ENCODE measurements at regions of chr20 and their contacts with region 1.

Region 1: DNA sequence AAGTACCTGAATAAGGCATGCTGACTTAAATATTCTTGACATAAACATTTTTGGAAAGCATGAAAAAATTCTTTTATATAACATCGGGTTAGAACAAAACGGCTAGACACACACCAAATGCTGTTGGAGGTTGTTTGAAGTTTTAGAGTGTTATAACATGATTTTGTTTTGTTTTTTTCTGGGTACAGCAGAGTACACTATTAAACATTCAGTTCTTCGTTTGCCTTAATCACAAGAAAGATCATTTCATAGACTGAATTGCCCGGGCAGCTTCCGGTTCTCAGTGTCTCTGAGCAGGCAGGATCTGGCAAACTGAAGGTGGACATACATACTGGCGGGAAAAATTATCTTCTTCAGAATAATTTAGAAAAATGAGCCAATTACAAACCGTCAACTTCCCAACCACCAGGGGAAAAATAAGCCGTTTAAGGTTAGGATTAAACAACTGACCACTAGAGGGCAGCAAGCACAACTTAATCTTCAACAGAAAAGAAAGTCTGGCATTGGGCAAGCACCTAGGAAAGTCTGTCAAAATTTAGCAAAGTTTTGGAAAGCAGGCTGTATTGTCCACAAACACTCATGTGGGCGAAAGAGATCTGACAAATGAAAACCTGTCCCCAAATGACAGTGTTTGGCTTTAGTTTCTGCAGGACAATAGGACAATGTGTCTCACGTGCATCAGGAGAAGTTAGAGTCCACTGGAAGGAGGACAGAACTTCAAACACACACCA is 15.0 kb downstream of the ZNF217 start:
- DNase-seq: peak in 2 of 10 donors; percentile 39 to 48
- H3K4me3 ChIP-seq: peak overlapping the region in 30 of 59 donors; percentile 0 to 40 (median 20)
- H3K27ac ChIP-seq: peak overlapping the region in 33 of 59 donors; percentile 5 to 78 (median 42)
- H3K27me3 ChIP-seq: no peaks in the 10 kb centered on the region
- CTCF ChIP-seq: peak; percentile 88 to 99 (median 96)

Region 2: DNA sequence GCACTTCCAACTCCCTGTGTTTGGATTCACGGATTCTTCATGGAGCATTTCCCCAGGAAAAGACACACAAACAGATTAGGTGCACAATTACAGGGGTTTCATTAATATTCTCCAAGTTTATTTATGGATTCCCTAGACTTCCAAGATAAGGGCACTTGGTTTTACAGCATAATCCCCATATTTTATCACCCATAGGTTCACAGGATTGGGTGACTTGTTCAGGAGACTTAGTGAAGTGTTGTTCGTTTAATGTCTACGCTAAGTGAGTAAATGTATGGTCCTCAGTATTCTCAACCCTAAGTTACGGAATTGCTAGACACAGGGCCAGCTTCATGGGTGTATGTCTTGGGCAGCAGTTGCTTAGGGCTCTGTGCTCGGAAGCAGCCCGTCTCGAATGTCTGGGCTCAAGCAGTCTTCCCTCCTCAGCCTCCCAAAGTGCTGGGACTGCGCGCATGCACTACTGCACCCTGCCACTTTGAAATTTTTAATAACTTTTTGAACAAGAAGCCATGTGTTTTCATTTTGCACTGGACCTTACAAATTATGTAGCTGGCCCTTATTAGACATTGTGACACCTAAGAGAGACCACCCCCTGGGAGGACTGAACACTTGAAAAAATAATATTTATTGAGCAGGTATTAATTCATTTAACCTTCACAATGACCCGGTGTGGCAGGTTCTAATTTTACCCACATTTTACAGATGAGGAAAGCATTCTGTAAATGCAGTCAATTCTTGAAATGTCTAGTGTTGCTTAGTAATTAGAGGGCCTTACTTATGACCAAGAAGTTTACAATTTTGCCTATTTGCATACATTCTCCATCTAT is 106.5 kb after region 1 on chr20:
- intact Hi-C with region 1: no loop called
- DNase-seq: no peak
- H3K4me3 ChIP-seq: no peak overlapping the region
- H3K27ac ChIP-seq: no peak overlapping the region
- H3K27me3 ChIP-seq: no peaks in the 10 kb centered on the region
- CTCF ChIP-seq: no peak

Region 3: DNA sequence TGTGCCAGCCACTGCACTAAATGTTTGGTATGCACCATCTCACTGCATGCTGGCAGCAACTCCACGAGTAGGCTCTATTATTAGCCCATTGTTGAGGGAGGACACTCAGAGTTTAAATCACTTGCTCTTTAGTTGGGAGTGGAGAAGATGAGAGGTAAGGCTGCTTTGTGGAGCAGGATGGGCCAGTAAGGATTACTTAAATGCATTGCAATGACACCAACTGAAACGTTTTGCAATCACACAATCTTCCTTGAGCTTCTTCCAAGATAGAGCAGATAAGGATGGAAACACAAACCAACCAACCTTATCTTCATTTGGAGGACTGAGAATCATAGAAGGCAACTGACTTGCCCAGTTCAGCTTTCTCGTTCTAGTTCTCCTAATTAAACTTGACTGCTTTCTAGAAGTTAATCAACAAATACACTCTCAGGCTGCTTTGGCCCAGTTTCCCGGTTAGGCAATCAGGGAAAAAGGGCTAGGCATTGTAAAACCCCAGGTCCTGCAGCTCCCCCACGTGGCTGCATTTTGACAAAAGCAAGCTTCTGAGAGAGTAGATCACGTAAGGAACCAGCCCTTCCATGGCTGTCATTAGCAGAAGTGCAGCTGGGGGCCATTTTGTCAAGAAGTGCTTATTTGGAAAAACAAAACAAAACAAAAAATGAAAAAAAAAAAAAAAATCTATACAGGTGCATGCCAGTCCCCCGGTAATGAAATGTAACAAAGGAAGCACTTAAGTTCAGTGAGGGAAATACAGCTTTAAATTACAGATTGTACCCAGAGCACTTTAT is 361.1 kb after region 1 on chr20:
- intact Hi-C with region 1: loop called (anchors 5 kb)
- DNase-seq: peak; percentile 15 to 91 (median 82)
- H3K4me3 ChIP-seq: peak overlapping the region in 49 of 59 donors; percentile 1 to 60 (median 34)
- H3K27ac ChIP-seq: peak overlapping the region in 56 of 59 donors; percentile 37 to 86 (median 70)
- H3K27me3 ChIP-seq: no peaks in the 10 kb centered on the region
- CTCF ChIP-seq: peak; percentile 40 to 84 (median 72)

Region 4: GRCh38 chr20:54062812-54063280 is 484.2 kb after region 1 on chr20:
- intact Hi-C with region 1: loop called (anchors 2 to 5 kb)
- DNase-seq: no peak
- H3K4me3 ChIP-seq: no peak overlapping the region
- H3K27ac ChIP-seq: peak overlapping the region in 1 of 59 donors; percentile 36
- H3K27me3 ChIP-seq: peaks cover 0 to 4% (median 0%) of the 10 kb centered on the region in 45 donors
- CTCF ChIP-seq: peak; percentile 29 to 86 (median 75)

Region 5: GRCh38 chr20:54207743-54208547 is 629.3 kb after region 1 on chr20 and contains the start of gene PFDN4:
- intact Hi-C with region 1: loop called (anchors 10 kb)
- DNase-seq: peak; percentile 70 to 87 (median 78)
- H3K4me3 ChIP-seq: peak within 1 kb of the TSS; percentile 56 to 99 (median 93)
- H3K27ac ChIP-seq: peak within 1 kb of the TSS; percentile 92 to 100 (median 99)
- H3K27me3 ChIP-seq: no peaks in the 10 kb centered on the region
- CTCF ChIP-seq: peak; percentile 46 to 94 (median 85)
- total RNA-seq, gene PFDN4: 12.0 to 56.7 (median 33.2) TPM